GM12878 (cell line): ENCODE measurements at regions of chr15 and their contacts with region 1.

Region 1: GRCh38 chr15:65115542-65115941 is 542 bp upstream of the UBAP1L start:
- DNase-seq: no peak
- ATAC-seq: no peak
- H3K4me3 ChIP-seq: no peak overlapping the region
- H3K27ac ChIP-seq: no peak overlapping the region
- H3K4me1 ChIP-seq: no peaks in the 10 kb centered on the region
- H3K27me3 ChIP-seq: no peaks in the 10 kb centered on the region
- CTCF ChIP-seq: no peak
- EP300 ChIP-seq: no peak
- POLR2A ChIP-seq: no peak
- RAD21 ChIP-seq: no peak

Region 2: DNA sequence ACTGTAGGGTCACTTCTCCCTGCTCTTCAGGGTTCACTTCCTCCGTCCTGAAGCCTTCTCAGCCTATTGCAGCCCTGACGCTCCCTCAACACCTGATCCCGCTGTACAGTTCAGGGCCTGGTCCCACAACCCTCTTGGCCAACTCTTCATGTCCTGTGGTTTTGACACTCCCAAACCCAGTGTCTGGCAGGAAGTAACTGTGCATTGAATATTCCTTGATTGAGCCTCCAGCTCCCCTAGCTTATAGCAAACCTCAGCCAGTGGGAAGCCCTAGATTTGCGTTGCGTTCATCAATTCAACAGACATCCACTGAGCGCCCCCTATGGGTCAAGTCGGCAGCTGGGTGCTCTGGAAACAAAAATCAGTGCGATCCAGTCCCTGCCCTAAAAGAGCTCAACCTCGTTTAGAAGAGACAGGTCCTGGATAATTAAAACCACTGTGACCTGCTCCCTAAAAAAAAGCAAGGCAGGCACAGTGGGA is 14.1 kb before region 1 on chr15:
- CTCF ChIA-PET with region 1: interaction called, 10 read pairs
- POLR2A ChIA-PET with region 1: no interaction called
- RAD21 ChIA-PET with region 1: no interaction called
- SMC1A ChIA-PET with region 1: interaction called, 3 read pairs
- in situ Hi-C with region 1: no loop called
- intact Hi-C with region 1: no loop called
- DNase-seq: no peak
- ATAC-seq: peak; percentile 64
- H3K4me3 ChIP-seq: no peak overlapping the region
- H3K27ac ChIP-seq: no peak overlapping the region
- H3K4me1 ChIP-seq: no peaks in the 10 kb centered on the region
- H3K27me3 ChIP-seq: no peaks in the 10 kb centered on the region
- CTCF ChIP-seq: peak; percentile 55 to 76 (median 72)
- EP300 ChIP-seq: no peak
- POLR2A ChIP-seq: no peak
- RAD21 ChIP-seq: peak; percentile 65